PC-3 (cell line): ENCODE measurements at regions of chr7 and their contacts with region 1.

Region 1: DNA sequence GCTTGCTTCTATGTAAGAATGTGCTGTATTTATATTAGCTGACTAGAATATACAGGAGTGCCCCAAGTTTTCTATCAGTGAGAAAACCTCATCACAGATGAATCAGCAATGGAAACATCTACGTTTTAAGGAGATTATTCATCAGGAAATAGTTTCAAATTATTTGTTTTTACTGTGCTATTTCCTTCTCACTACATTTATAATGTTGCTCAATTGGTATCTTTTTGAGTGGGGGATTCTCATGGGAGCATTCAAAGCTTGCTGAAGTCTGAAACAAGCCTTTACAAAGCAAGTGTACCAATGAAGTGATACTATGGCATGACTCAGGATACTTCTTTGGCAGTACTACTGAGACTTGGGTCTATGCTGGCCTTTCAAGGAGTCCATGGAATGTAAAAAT is 191.1 kb upstream of the SLC26A5 start:
- DNase-seq: peak; percentile 88
- ATAC-seq: peak; percentile 77
- H3K4me3 ChIP-seq: peak overlapping the region; percentile 8; the same call in 1 of the 2 replicates
- H3K27ac ChIP-seq: peak overlapping the region; percentile 97
- H3K4me1 ChIP-seq: peaks cover 67% of the 10 kb centered on the region
- H3K27me3 ChIP-seq: no peaks in the 10 kb centered on the region
- CTCF ChIP-seq: no peak

Region 2: DNA sequence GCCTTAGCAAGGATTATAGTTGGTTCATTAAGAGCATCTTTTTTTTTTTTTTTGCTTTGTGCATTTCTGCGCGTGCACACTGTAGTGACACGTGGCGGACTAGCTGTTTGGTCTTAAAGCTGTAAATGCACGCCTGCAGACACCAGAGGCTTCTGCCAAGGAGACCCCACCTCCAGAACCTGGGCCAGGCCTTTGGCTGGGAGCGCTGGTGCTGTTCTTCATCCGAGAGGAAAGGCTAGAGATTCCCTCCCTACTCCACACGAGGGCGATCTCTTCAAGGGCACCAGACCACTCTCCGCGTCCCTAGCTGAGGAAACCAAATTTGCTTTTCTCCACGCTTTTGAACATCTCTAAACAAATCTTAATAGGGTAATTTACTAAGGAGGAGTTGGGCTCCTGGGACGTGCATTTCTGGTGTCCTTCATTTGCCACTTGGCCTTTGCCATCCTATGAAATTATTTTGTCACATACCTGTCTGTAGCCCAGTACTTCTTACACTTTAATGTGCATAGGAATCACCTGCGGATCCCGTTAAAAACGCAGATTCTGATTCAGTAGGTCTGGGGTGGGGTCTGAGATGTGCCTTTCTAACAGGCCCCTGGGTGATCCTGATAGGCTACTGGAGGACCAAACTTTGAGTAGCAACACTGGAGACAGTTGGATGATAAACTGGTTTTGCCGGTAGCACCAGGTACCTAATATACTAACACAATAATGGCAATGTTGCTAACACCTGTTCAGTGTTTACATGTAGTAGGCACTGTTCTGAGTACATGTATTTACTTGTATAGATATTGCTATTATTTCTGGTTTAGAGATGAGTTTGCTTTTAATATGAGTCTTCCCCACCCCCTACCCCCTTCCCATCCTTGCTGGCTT is 189.8 kb before region 1 on chr7:
- CTCF ChIA-PET with region 1: no interaction called
- POLR2A ChIA-PET with region 1: no interaction called
- intact Hi-C with region 1: loop called (anchors 2 kb)
- DNase-seq: peak; percentile 75
- ATAC-seq: peak; percentile 66
- H3K4me3 ChIP-seq: peak overlapping the region; percentile 71
- H3K27ac ChIP-seq: no peak overlapping the region
- H3K4me1 ChIP-seq: peaks cover 17% of the 10 kb centered on the region
- H3K27me3 ChIP-seq: no peaks in the 10 kb centered on the region
- CTCF ChIP-seq: peak; percentile 90

Region 3: DNA sequence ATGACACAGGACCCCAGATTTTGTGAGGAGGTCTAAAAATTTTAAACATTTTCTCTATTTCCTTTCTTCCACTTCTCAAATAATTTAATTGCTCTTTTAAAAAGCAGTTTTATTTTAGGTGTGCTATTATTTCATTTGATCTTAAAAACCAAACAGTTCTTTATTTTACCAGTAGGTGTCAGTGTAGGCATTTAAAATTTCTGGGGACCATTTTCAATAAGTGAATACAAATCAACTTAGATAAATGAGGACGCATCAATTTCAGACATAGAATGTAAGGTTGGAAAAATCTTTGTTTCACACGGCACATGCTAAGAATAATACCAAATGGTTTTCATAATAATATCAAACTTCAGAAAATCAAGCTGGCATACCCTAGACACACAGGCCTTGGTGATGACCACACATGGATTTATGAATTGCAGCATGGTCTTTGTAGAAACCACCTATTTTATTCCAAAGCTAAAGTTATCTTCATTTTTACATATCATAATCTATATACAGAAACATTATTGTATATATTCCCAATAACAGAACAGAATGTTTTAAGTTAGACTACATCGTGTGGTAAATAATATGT is 63.5 kb before region 1 on chr7:
- CTCF ChIA-PET with region 1: no interaction called
- POLR2A ChIA-PET with region 1: no interaction called
- intact Hi-C with region 1: loop called (anchors 5 kb)
- DNase-seq: peak; percentile 78
- ATAC-seq: no peak; the same call in none of the 2 replicates
- H3K4me3 ChIP-seq: no peak overlapping the region
- H3K27ac ChIP-seq: no peak overlapping the region
- H3K4me1 ChIP-seq: no peaks in the 10 kb centered on the region
- H3K27me3 ChIP-seq: no peaks in the 10 kb centered on the region
- CTCF ChIP-seq: peak; percentile 80

Region 4: DNA sequence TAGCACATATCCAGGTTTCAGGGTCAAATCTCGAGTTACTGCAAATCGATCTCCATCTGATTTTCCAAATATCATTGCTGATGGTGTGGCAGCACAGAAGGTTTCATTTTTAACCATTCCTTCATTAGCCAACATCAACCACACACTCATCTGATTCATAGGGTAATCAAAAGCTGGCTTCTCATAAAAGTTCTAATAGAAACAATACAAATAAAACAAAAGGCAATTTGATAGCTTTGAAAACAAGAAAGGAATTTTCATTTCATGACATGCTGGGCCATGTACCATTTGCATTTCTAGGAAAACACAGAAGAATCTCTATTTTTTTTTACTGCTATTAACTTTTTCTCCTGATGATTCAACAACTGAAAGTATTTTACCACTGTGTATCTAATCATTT is 43.4 kb before region 1 on chr7:
- CTCF ChIA-PET with region 1: interaction called, 3 read pairs
- POLR2A ChIA-PET with region 1: no interaction called
- intact Hi-C with region 1: loop called (anchors 2 kb)
- DNase-seq: peak; percentile 63
- ATAC-seq: peak; percentile 70
- H3K4me3 ChIP-seq: peak overlapping the region; percentile 29; the same call in 1 of the 2 replicates
- H3K27ac ChIP-seq: peak overlapping the region; percentile 60
- H3K4me1 ChIP-seq: peaks cover 34% of the 10 kb centered on the region
- H3K27me3 ChIP-seq: no peaks in the 10 kb centered on the region
- CTCF ChIP-seq: no peak

Region 5: DNA sequence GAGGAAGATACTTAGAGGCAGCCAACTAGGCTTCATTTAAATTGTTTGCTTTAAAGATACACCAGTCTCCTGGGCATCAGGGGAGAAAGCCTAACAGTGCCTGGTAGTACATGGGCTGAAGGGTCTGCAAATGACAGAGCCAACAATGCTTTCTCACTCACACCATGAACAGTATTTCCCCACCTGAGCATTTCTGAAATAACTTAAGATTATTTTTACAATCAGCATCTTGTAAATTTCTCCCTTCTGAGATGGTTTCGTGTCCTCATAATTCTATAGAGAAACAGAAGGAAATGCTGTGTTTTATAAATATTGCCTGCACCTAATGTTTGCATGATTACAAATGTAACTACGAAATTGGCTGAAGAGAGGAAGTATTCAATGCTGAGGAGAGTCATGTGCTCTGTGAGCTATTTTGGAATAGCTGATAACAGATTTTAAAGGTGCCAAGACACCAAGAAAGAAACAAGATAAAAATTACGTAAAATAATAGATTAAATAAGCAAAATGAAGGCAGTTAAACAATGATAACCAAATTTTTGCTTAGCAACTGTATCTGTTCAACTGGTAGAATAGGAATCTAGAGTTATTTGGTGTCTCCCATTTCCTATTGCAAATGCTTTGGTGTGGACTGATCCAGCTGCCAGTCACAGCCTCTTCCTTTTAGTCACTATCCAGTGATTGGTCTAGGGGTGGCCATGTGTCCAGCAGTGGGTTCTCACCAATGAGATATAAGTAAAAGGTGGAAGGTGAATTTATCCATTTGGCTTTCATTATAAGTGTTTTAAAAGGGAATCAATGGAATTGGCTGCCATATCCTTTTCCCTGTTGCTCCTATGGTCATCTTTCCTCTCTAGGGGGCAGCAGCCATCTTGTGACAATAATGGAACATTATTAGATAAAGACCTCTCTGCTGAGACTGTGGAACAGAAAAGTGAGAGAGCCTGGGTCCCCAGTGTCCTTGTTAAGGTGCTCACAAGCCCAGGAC is 23.1 kb before region 1 on chr7:
- CTCF ChIA-PET with region 1: no interaction called
- POLR2A ChIA-PET with region 1: no interaction called
- intact Hi-C with region 1: no loop called
- DNase-seq: peak; percentile 37
- ATAC-seq: peak; percentile 31; the same call in 1 of the 2 replicates
- H3K4me3 ChIP-seq: no peak overlapping the region
- H3K27ac ChIP-seq: no peak overlapping the region
- H3K4me1 ChIP-seq: no peaks in the 10 kb centered on the region
- H3K27me3 ChIP-seq: no peaks in the 10 kb centered on the region
- CTCF ChIP-seq: peak; percentile 57

Region 6: GRCh38 chr7:103660455-103661371 is 23.6 kb after region 1 on chr7:
- CTCF ChIA-PET with region 1: no interaction called
- POLR2A ChIA-PET with region 1: no interaction called
- intact Hi-C with region 1: loop called (anchors 2 kb)
- DNase-seq: peak; percentile 83
- ATAC-seq: peak; percentile 80
- H3K4me3 ChIP-seq: no peak overlapping the region
- H3K27ac ChIP-seq: peak overlapping the region; percentile 56
- H3K4me1 ChIP-seq: peaks cover 15% of the 10 kb centered on the region
- H3K27me3 ChIP-seq: no peaks in the 10 kb centered on the region
- CTCF ChIP-seq: no peak

Region 7: DNA sequence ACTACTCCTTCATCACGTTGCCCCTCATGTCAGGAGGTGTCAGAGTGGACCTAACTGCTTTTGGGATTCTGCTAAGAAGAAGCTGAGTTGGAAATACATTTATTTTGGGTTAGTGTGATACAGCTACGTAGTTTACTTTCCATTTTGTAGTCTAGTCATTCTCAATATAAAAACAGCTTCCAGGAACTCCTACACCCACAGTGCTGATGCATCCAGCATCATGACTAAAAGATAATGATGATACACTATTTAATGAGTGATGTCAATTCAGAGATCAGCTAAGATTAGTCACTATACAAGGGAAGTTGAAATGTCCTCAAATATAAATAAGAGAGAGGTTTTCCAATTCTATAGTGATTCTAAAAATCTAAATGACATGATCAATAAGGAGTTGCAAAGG is 73.2 kb after region 1 on chr7:
- CTCF ChIA-PET with region 1: no interaction called
- POLR2A ChIA-PET with region 1: no interaction called
- intact Hi-C with region 1: loop called (anchors 1 kb)
- DNase-seq: peak; percentile 58
- ATAC-seq: peak; percentile 78
- H3K4me3 ChIP-seq: peak overlapping the region; percentile 34; the same call in 1 of the 2 replicates
- H3K27ac ChIP-seq: peak overlapping the region; percentile 84
- H3K4me1 ChIP-seq: peaks cover 28% of the 10 kb centered on the region
- H3K27me3 ChIP-seq: no peaks in the 10 kb centered on the region
- CTCF ChIP-seq: no peak